MCF 10A (cell line): ENCODE measurements at regions of chr16 and their contacts with region 1.

Region 1: DNA sequence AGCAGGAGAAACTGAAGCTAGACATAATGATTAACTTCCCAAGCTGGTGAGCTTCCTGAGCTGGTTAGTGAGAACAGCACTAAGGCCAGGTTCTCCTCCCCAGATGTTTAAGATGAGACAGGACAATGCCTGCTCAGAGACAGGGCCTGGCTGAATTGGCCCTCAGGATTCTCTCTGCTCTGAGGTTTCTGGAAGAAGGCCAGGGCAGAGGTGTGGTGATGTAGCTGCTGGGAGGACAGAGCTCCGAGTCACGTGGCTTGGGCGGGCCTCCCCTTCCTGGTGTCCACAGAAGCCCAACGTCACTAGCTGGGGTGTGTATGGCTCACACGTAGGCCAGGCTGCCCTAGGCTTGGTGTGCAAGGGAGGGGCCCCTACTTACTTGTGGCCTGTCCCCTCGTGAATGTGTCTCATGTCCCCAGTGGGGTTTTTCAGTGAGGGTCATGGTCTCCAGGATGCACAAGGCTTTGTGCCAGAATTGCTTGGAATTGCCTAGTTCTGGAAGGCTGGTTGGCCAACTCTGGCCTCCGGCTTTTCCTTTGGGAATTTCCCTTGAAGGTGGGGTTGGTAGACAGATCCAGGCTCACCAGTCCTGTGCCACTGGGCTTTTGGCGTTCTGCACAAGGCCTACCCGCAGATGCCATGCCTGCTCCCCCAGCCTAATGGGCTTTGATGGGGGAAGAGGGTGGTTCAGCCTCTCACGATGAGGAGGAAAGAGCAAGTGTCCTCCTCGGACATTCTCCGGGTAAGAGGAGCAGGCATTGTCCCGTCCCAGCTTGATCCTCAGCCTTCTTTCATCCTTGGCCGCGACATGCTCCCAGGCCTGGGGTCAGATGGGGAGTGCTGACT is 3.4 kb downstream of the NOD2 start:
- DNase-seq: peak; percentile 97
- H3K4me3 Mint-ChIP-seq: no peak overlapping the region
- H3K27ac Mint-ChIP-seq: peak overlapping the region; percentile 97
- H3K4me1 Mint-ChIP-seq: peaks cover 49% of the 10 kb centered on the region
- H3K27me3 Mint-ChIP-seq: no peaks in the 10 kb centered on the region
- CTCF ChIP-seq: no peak

Region 2: DNA sequence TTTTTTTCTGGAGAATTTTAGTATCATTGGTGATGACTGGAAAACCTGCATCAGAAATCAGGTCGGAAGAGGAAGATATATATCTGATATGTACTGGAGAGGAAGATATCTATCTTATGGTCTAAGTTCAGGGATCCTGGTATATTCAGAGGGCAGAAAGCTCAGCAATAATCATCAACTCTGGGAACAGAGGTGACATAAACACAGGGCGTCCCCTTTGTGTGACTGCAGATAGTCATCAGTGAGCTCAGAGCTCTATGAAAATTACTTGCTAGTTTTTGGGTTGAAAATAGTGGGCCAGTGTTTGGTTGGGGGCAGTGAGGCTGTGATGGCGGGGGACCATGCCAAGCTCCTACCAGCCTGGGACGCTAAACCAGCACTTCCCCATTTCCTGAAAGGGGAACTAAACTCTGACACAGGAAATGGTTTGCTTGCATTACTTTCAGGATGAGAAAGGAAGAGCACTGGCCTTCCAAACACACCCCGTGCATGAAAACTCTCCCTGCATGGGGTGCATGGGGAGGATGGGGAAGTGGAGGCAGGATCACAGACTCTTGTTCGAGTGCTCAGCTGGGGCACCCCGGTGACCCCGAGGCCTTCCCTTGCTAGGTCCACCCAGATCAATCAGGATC is 12.4 kb after region 1 on chr16:
- CTCF ChIA-PET with region 1: no interaction called
- POLR2A ChIA-PET with region 1: no interaction called
- intact Hi-C with region 1: no loop called
- DNase-seq: no peak
- H3K4me3 Mint-ChIP-seq: no peak overlapping the region
- H3K27ac Mint-ChIP-seq: no peak overlapping the region
- H3K4me1 Mint-ChIP-seq: no peaks in the 10 kb centered on the region
- H3K27me3 Mint-ChIP-seq: no peaks in the 10 kb centered on the region
- CTCF ChIP-seq: no peak

Region 3: GRCh38 chr16:50741808-50742575 is 45.2 kb after region 1 on chr16 and contains the start of gene CYLD:
- CTCF ChIA-PET with region 1: interaction called, 8 read pairs
- POLR2A ChIA-PET with region 1: interaction called, 30 read pairs
- intact Hi-C with region 1: loop called (anchors 1 kb)
- DNase-seq: peak; percentile 100
- H3K4me3 Mint-ChIP-seq: peak within 1 kb of the TSS; percentile 73
- H3K27ac Mint-ChIP-seq: peak within 1 kb of the TSS; percentile 91
- H3K4me1 Mint-ChIP-seq: peaks cover 42% of the 10 kb centered on the region
- H3K27me3 Mint-ChIP-seq: no peaks in the 10 kb centered on the region
- CTCF ChIP-seq: no peak
- total RNA-seq, gene CYLD: 53.7 and 69.1 TPM in 2 replicates

Region 4: DNA sequence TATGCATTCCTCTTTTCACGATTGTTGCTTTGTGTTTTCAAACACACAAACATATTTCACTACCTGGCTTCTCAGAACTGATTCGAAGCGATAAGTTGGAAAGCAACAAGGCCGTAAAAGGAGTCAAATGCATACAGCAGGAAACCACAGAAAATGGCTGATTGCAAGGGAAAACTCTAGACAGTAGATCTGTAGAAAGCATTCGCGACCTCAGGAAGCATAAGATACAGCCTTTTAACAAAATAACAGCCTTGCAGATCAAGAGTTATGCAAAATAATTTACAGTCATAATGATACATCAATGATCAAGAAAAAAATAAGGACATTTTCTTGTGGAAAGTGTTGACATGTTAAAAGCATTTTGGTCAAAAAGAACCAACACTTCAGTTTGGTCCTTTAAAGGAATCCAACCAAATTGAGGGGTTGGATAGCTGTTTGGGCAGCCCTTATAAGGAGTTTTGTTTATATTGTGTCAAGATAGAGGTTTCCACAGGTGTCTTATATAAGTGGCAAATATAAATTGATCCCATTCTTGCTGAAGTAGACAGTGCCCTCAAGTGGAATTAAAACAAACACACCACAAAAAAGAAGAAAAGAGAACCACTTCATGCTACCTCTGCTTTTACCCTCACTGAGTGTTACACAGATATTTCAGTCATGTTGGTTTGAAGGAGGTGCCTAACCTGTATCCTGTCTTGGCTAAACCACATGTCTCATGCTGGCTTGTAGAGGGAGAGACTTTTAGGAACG is 50.6 kb after region 1 on chr16:
- CTCF ChIA-PET with region 1: interaction called, 8 read pairs
- POLR2A ChIA-PET with region 1: interaction called, 20 read pairs
- intact Hi-C with region 1: no loop called
- DNase-seq: peak; percentile 45
- H3K4me3 Mint-ChIP-seq: no peak overlapping the region
- H3K27ac Mint-ChIP-seq: no peak overlapping the region
- H3K4me1 Mint-ChIP-seq: peaks cover 29% of the 10 kb centered on the region
- H3K27me3 Mint-ChIP-seq: no peaks in the 10 kb centered on the region
- CTCF ChIP-seq: peak; percentile 51

Region 5: GRCh38 chr16:50830698-50831097 is 133.9 kb after region 1 on chr16:
- CTCF ChIA-PET with region 1: no interaction called
- POLR2A ChIA-PET with region 1: no interaction called
- intact Hi-C with region 1: no loop called
- DNase-seq: peak; percentile 40
- H3K4me3 Mint-ChIP-seq: no peak overlapping the region
- H3K27ac Mint-ChIP-seq: peak overlapping the region; percentile 57
- H3K4me1 Mint-ChIP-seq: no peaks in the 10 kb centered on the region
- H3K27me3 Mint-ChIP-seq: no peaks in the 10 kb centered on the region
- CTCF ChIP-seq: no peak